ACHN (cell line): ENCODE measurements at regions of chr10 and their contacts with region 1.

Region 1: DNA sequence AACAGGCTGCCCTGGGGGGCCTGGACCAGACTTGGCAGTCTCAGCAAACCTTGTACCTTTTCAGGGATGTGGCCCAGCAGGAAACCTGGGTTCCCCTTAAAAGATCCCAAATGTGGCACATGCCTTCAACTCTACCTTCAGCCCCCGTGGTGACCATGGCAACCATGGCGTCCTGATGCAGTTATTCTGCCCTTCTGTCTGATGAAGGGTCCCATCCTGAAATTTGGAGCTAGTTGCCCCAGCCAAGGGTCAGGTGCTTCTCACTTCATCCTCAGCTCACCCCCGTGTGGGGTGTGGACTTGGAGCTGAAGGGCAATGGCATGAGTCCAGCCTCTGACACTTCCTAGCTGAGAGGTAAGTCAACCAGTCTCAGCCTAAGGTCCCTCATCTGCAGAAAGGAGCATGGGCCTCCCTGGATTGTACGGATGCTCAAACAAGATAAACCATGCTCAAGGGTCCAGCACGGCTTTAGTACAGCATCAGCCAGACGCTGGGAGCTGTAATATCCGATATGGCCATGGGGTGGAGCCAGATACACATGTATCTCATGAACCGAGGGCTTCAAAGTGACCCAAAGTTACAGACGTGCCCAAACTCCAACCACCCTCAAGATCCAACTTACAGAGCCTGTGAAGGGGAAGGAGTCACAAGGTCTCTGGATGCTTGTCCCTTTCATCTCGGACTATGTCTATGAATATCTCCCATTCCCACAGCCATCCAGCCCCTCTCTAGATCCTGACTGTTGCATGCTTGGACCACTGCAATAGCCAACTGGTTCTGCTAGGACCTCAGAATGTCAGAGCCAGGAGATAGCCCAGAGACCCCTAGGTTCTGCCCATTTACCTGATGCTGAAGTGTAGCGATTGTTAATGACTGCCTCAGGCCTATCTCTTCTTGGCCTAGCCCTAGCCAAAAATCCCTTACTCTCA is 142.5 kb downstream of the SH3PXD2A start:
- DNase-seq: peak; percentile 71

Region 2: DNA sequence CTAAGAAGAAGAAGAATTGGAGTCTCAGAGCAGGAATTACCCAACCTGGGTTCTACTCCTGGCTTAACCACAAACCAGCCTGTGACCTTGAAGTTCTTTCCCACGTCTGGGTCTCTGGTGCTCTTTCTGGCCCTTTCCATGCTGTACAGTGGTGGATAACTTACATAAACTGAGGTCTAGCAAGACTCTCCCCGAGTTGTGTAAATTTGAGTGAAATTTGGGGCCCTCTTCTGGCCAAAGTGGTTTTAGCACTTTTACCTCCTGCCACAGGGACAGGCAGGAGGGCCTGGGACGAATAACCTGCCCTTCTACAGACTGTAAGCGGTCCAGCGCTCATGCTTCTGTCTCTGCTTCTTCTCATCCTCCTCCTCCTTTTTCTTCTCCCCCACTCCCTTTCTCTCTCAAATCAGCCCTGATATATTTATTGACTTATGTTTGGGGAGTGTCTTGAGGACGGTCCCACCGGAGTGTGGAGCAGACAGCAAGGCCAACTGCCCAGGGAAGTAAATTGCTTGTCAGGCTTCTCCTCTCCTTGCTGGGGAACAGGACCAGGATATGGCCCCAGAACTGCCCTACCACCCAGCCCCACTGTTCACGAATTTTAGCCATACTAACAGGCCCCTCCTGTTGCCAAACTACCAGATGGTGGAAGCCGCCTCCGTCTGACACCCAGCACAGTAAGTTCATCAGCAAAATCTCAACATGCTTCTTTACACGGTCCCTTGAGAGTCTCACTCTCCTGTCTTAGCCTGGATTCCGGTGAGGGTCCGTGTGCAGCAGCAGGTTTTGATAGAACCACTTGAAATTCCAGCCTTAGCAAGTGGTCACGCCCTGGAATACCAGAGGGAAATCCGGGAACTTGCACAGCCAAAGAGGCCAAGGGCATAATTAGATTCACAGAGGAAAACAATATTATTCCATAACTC is 146.6 kb after region 1 on chr10:
- in situ Hi-C with region 1: loop called (anchors 25 kb)
- DNase-seq: peak; percentile 67

Region 3: GRCh38 chr10:103966671-103967447 is 254.0 kb after region 1 on chr10 and contains the start of gene SLK:
- in situ Hi-C with region 1: no loop called
- DNase-seq: peak; percentile 87

Region 4: DNA sequence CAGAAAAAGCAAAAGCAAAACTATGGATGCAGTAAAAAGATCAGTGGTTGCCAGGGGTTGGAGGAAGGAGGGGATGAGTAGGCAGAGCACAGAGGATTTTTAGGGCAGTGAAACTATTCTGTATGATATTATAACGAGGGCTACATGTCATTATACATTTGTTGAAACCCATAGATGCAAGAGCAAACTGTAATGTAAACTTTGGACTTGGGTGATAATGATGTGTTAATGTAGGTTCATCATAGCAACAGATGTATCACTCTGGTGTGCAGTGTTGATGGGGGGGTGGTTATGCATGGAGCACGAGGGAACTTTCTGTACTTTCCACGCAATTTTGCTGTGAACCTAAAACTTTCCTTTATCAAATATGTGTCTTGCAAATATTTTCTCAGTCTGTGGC is 277.3 kb after region 1 on chr10:
- in situ Hi-C with region 1: no loop called
- DNase-seq: no peak